Panc1 (cell line): ENCODE measurements at regions of chr3 and their contacts with region 1.

Region 1: GRCh38 chr3:177137774-177138705 is 59.2 kb downstream of the TBL1XR1 start:
- DNase-seq: no peak
- ATAC-seq: no peak
- H3K4me3 ChIP-seq: no peak overlapping the region
- H3K27ac ChIP-seq: no peak overlapping the region
- H3K4me1 ChIP-seq: peaks cover 34% of the 10 kb centered on the region
- H3K27me3 ChIP-seq: no peaks in the 10 kb centered on the region
- CTCF ChIP-seq: no peak

Region 2: GRCh38 chr3:177124882-177125281 is 13.2 kb before region 1 on chr3:
- CTCF ChIA-PET with region 1: no interaction called
- POLR2A ChIA-PET with region 1: no interaction called
- in situ Hi-C with region 1: no loop called
- intact Hi-C with region 1: no loop called
- DNase-seq: no peak
- ATAC-seq: no peak
- H3K4me3 ChIP-seq: no peak overlapping the region
- H3K27ac ChIP-seq: no peak overlapping the region
- H3K4me1 ChIP-seq: peaks cover 4% of the 10 kb centered on the region; the same call in 1 of the 2 replicates
- H3K27me3 ChIP-seq: no peaks in the 10 kb centered on the region
- CTCF ChIP-seq: no peak

Region 3: GRCh38 chr3:177150970-177151627 is 13.1 kb after region 1 on chr3:
- CTCF ChIA-PET with region 1: no interaction called
- POLR2A ChIA-PET with region 1: interaction called, 14 read pairs
- in situ Hi-C with region 1: no loop called
- intact Hi-C with region 1: no loop called
- DNase-seq: peak; percentile 58
- ATAC-seq: peak; percentile 93
- H3K4me3 ChIP-seq: peak overlapping the region; percentile 3 to 7; a peak in 2 of 4 replicates
- H3K27ac ChIP-seq: peak overlapping the region; percentile 84
- H3K4me1 ChIP-seq: peaks cover 63% of the 10 kb centered on the region
- H3K27me3 ChIP-seq: no peaks in the 10 kb centered on the region
- CTCF ChIP-seq: no peak